Naive thymus-derived CD8-positive, alpha-beta T cell (primary cell): ENCODE measurements at regions of chr7 and their contacts with region 1.

Region 1: GRCh38 chr7:141014524-141015395 is at the start of gene MRPS33:
- DNase-seq: peak; percentile 81 to 98 (median 96)
- ATAC-seq: peak; percentile 94 to 95
- H3K4me3 Mint-ChIP-seq: peak within 1 kb of the TSS; percentile 91 to 100 (median 98)
- H3K27ac Mint-ChIP-seq: peak within 1 kb of the TSS; percentile 98 to 100 (median 100)
- H3K4me1 Mint-ChIP-seq: peaks cover 6 to 44% (median 38%) of the 10 kb centered on the region in 4 donors
- H3K27me3 Mint-ChIP-seq: peaks cover 3 to 20% (median 10%) of the 10 kb centered on the region in 5 donors
- polyA plus RNA-seq, gene MRPS33: 74.7 to 105 (median 100) TPM

Region 2: DNA sequence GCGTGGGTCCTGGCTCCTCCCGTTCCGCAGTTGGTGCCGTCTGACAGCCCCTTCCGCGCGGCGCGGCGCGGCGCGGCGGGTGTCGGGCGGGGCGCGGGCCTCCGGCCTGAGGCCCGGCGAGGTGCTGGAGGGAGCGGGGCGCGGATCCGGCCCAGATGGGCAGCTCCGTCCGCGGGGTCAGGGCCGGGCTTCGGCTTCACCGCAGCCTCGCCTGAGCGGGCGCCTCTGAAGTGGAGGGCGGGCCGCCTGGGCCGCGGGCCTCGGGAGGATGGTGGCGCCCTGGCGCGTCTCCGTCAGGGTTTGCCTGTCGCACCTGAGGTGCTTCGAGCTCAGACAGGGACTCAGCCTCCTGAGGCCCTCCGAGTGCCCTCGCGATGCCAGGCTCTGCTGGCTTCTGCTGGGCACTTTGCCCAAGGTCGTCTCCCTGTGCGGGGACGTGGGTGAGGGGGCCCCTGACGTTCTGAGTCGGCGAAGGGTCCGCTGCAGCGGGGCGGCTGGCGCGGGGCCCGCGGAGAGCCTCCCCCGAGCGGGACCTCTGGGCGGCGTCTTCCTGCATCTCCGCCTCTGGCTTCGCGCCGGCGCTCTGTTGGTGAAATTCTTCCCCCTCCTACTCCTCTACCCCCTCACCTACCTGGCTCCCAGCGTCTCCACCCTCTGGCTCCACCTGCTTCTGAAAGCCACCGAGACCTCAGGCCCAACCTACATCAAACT is 341.5 kb before region 1 on chr7:
- POLR2A ChIA-PET with region 1: interaction called, 12 read pairs
- DNase-seq: peak; percentile 50 to 77 (median 63)
- ATAC-seq: peak; percentile 82 to 84
- H3K4me3 Mint-ChIP-seq: peak overlapping the region; percentile 86 to 94 (median 90)
- H3K27ac Mint-ChIP-seq: peak overlapping the region; percentile 81 to 97 (median 93)
- H3K4me1 Mint-ChIP-seq: peaks cover 14 to 53% (median 42%) of the 10 kb centered on the region in 4 donors
- H3K27me3 Mint-ChIP-seq: no peaks in the 10 kb centered on the region

Region 3: DNA sequence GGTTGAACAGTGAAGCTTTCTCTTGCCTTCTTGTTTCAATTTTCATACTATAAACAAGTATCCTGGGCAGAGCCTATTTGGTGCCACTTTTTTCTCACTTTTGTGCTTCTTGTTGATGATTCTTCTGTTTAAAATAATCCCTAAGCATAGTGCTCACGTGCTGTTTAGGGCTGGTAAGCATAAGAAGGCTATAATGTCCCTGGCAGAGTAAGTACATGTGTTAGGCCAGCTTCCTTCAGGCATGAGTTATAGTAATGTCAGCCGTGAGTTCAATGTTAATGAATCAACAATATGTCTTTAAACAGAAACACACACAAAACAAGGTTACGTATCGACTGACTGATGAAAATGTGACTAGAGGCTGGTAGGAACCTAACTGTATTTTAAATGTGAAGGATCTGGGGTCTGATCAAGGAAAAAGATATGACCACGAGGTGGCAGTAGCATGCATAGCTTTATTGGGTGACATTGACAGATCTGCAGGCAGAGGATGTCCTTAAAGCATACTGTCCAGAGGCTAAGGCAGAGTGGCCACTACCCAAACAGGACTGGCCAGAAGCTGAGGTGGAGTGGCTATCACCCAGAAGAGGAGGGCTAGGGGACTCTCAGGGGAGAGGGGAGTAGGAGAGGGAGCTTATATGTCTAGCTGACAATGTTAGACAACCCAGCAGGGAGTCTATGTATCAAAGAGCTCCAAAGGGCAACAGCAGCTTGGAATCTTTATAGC is 203.8 kb before region 1 on chr7:
- POLR2A ChIA-PET with region 1: interaction called, 14 read pairs
- DNase-seq: peak; percentile 11 to 76 (median 64)
- ATAC-seq: peak; percentile 78 to 82
- H3K4me3 Mint-ChIP-seq: no peak overlapping the region
- H3K27ac Mint-ChIP-seq: peak overlapping the region; percentile 7 to 79 (median 60)
- H3K4me1 Mint-ChIP-seq: peaks cover 2 to 7% (median 6%) of the 10 kb centered on the region in 4 donors
- H3K27me3 Mint-ChIP-seq: no peaks in the 10 kb centered on the region

Region 4: GRCh38 chr7:140902303-140902953 is 112.3 kb before region 1 on chr7:
- POLR2A ChIA-PET with region 1: interaction called, 11 read pairs
- DNase-seq: peak in 4 of 10 donors; percentile 22 to 68 (median 48)
- ATAC-seq: peak; percentile 79 to 81
- H3K4me3 Mint-ChIP-seq: peak overlapping the region; percentile 56 to 83 (median 73)
- H3K27ac Mint-ChIP-seq: peak overlapping the region; percentile 39 to 95 (median 86)
- H3K4me1 Mint-ChIP-seq: peaks cover 13 to 75% (median 61%) of the 10 kb centered on the region in 4 donors
- H3K27me3 Mint-ChIP-seq: no peaks in the 10 kb centered on the region

Region 5: GRCh38 chr7:140924019-140924820 is 90.5 kb before region 1 on chr7:
- POLR2A ChIA-PET with region 1: interaction called, 19 read pairs
- DNase-seq: peak; percentile 63 to 88 (median 82)
- ATAC-seq: peak; percentile 77 to 81
- H3K4me3 Mint-ChIP-seq: no peak overlapping the region
- H3K27ac Mint-ChIP-seq: no peak overlapping the region
- H3K4me1 Mint-ChIP-seq: peaks cover 10 to 26% (median 23%) of the 10 kb centered on the region in 4 donors
- H3K27me3 Mint-ChIP-seq: no peaks in the 10 kb centered on the region

Region 6: GRCh38 chr7:141737834-141738591 is 723.3 kb after region 1 on chr7 and contains the start of gene SSBP1:
- POLR2A ChIA-PET with region 1: interaction called, 20 read pairs
- DNase-seq: peak; percentile 72 to 94 (median 91)
- ATAC-seq: peak; percentile 83 to 88
- H3K4me3 Mint-ChIP-seq: peak within 1 kb of the TSS; percentile 95 to 99 (median 98)
- H3K27ac Mint-ChIP-seq: peak within 1 kb of the TSS; percentile 98 to 99 (median 98)
- H3K4me1 Mint-ChIP-seq: peaks cover 19 to 53% (median 48%) of the 10 kb centered on the region in 4 donors
- H3K27me3 Mint-ChIP-seq: no peaks in the 10 kb centered on the region
- polyA plus RNA-seq, gene SSBP1: 341 to 350 (median 349) TPM